ENCODE measurements at regions of chr17 and their contacts with region 1.

Region 1: DNA sequence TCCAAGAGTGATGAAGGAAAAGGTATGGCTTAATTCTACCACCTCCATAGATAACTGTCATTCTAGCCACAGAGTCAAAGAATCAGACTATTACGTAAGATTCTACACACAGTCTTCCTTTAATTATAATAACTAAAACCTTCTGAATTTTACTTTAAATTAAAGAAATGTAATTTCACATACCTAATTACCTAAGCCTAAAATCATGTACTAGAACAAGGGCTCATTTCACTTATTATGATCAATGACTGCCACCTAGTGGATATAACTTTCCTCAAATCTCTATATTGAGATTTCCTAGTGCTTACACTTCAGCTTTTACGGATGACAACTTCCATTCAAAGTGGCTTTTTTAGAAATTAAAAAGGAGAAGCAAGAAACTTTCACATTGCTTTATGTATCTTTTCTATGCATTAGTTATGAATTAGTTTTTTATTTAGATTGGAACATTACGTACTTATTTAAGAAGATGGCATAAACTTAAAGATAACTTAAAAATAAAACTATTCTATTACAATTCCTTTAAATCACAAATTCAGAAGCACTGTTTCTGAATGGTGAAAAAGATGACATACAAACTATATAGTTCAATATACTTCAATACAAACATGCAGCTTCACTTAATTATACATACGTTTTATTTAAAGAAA is 18.2 kb upstream of the ABCA10 start:
- DNase-seq: peak in 1 of 35 experiments; percentile 55
- ATAC-seq: no peak
- H3K4me3 ChIP-seq: no peak overlapping the region
- H3K4me3 Mint-ChIP-seq: no peak overlapping the region
- H3K27ac ChIP-seq: no peak overlapping the region
- H3K27ac Mint-ChIP-seq: no peak overlapping the region
- H3K4me1 ChIP-seq: no peaks in the 10 kb centered on the region
- H3K4me1 Mint-ChIP-seq: no peaks in the 10 kb centered on the region
- H3K27me3 ChIP-seq: no peaks in the 10 kb centered on the region
- H3K27me3 Mint-ChIP-seq: no peaks in the 10 kb centered on the region

Region 2: GRCh38 chr17:68777243-68777855 is 469.5 kb before region 1 on chr17:
- CTCF ChIA-PET with region 1: interaction called, 4 to 15 read pairs
- POLR2A ChIA-PET with region 1: no interaction called
- DNase-seq: peak in 14 of 35 experiments; percentile 2 to 54 (median 10)
- ATAC-seq: no peak
- H3K4me3 ChIP-seq: no peak overlapping the region
- H3K4me3 Mint-ChIP-seq: no peak overlapping the region
- H3K27ac ChIP-seq: no peak overlapping the region
- H3K27ac Mint-ChIP-seq: no peak overlapping the region
- H3K4me1 ChIP-seq: no peaks in the 10 kb centered on the region
- H3K4me1 Mint-ChIP-seq: no peaks in the 10 kb centered on the region
- H3K27me3 ChIP-seq: no peaks in the 10 kb centered on the region
- H3K27me3 Mint-ChIP-seq: peaks cover 11% of the 10 kb centered on the region in 2 donors